ENCODE measurements at regions of chr3 and their contacts with region 1.

Region 1: GRCh38 chr3:142993958-142994442 is 7.4 kb upstream of the U2SURP start:
- DNase-seq: no peak
- ATAC-seq: peak; percentile 81
- H3K4me3 ChIP-seq: no peak overlapping the region
- H3K27ac ChIP-seq: no peak overlapping the region
- H3K4me1 ChIP-seq: 0 out of 2 replicates have a peak, but pooled peaks cover 3% of the 10 kb centered on the region
- H3K27me3 ChIP-seq: no peaks in the 10 kb centered on the region
- CTCF ChIP-seq: peak; percentile 68 to 83 (median 75)
- EP300 ChIP-seq: no peak
- POLR2A ChIP-seq: no peak
- RAD21 ChIP-seq: peak; percentile 83

Region 2: GRCh38 chr3:142595951-142596725 is 397.9 kb before region 1 on chr3 and contains the start of gene PLS1:
- CTCF ChIA-PET with region 1: no interaction called
- POLR2A ChIA-PET with region 1: no interaction called
- RAD21 ChIA-PET with region 1: no interaction called
- SMC1A ChIA-PET with region 1: no interaction called
- in situ Hi-C with region 1: loop called (anchors 5 kb)
- intact Hi-C with region 1: no loop called
- DNase-seq: peak; percentile 37
- ATAC-seq: peak; percentile 90
- H3K4me3 ChIP-seq: peak within 1 kb of the TSS; percentile 79
- H3K27ac ChIP-seq: 0 out of 2 replicates have a peak within 1 kb of the TSS, but pooled peaks have one; percentile 33
- H3K4me1 ChIP-seq: peaks cover 4% of the 10 kb centered on the region; the same call in 1 of the 2 replicates
- H3K27me3 ChIP-seq: no peaks in the 10 kb centered on the region
- CTCF ChIP-seq: no peak
- EP300 ChIP-seq: no peak
- POLR2A ChIP-seq: peak; percentile 84
- RAD21 ChIP-seq: no peak
- polyA plus RNA-seq, gene PLS1: 1.2 TPM

Measured in GM12878 (cell line).